ENCODE measurements at regions of chr2 and their contacts with region 1.

Region 1: GRCh38 chr2:197705121-197705911 is at the start of gene MARS2:
- DNase-seq: peak; percentile 43
- ATAC-seq: peak; percentile 92
- H3K4me3 ChIP-seq: peak within 1 kb of the TSS; percentile 76 to 94
- H3K27ac ChIP-seq: peak within 1 kb of the TSS; percentile 99
- H3K4me1 ChIP-seq: peaks cover 15% of the 10 kb centered on the region
- H3K27me3 ChIP-seq: no peaks in the 10 kb centered on the region
- CTCF ChIP-seq: no peak
- total RNA-seq, gene MARS2: 8.7 TPM

Region 2: GRCh38 chr2:197499594-197500526 is 205.5 kb before region 1 on chr2 and contains the starts of genes HSPD1 and HSPE1:
- CTCF ChIA-PET with region 1: interaction called, 3 read pairs
- POLR2A ChIA-PET with region 1: no interaction called
- in situ Hi-C with region 1: no loop called
- intact Hi-C with region 1: loop called (anchors 5 kb)
- DNase-seq: peak; percentile 96
- ATAC-seq: peak; percentile 94
- H3K4me3 ChIP-seq: peak within 1 kb of the TSS; percentile 60 to 93
- H3K27ac ChIP-seq: peak within 1 kb of the TSS; percentile 96
- H3K4me1 ChIP-seq: peaks cover 33% of the 10 kb centered on the region
- H3K27me3 ChIP-seq: no peaks in the 10 kb centered on the region
- CTCF ChIP-seq: no peak
- total RNA-seq, gene HSPD1: 553 TPM
- total RNA-seq, gene HSPE1: 278 TPM

Region 3: GRCh38 chr2:198116756-198117155 is 411.4 kb after region 1 on chr2:
- CTCF ChIA-PET with region 1: no interaction called
- POLR2A ChIA-PET with region 1: no interaction called
- in situ Hi-C with region 1: no loop called
- intact Hi-C with region 1: no loop called
- DNase-seq: no peak
- ATAC-seq: no peak
- H3K4me3 ChIP-seq: no peak overlapping the region
- H3K27ac ChIP-seq: no peak overlapping the region
- H3K4me1 ChIP-seq: no peaks in the 10 kb centered on the region
- H3K27me3 ChIP-seq: no peaks in the 10 kb centered on the region
- CTCF ChIP-seq: no peak

Measured in Panc1 (cell line).